A549 (cell line): ENCODE measurements at regions of chr1 and their contacts with region 1.

Region 1: GRCh38 chr1:156728597-156729462 is at the start of gene ISG20L2:
- DNase-seq: peak; percentile 94 to 99
- ATAC-seq: peak; percentile 87 to 89
- H3K4me3 ChIP-seq: peak within 1 kb of the TSS; percentile 89
- H3K27ac ChIP-seq: peak within 1 kb of the TSS; percentile 93
- H3K4me1 ChIP-seq: peaks cover 35% of the 10 kb centered on the region
- CTCF ChIP-seq: no peak
- EP300 ChIP-seq: no peak
- POLR2A ChIP-seq: peak; percentile 29
- RAD21 ChIP-seq: no peak
- polyA plus RNA-seq, gene ISG20L2: 42.5 and 55.7 TPM in 2 replicates

Region 2: GRCh38 chr1:156659994-156660751 is 68.7 kb before region 1 on chr1:
- CTCF ChIA-PET with region 1: interaction called, 24 read pairs
- POLR2A ChIA-PET with region 1: interaction called, 10 read pairs
- DNase-seq: peak; percentile 98
- ATAC-seq: peak; percentile 70 to 83
- H3K4me3 ChIP-seq: peak overlapping the region; percentile 77
- H3K27ac ChIP-seq: peak overlapping the region; percentile 97
- H3K4me1 ChIP-seq: peaks cover 65% of the 10 kb centered on the region
- CTCF ChIP-seq: peak; percentile 99
- EP300 ChIP-seq: peak in 1 of 2 experiments; percentile 62; a peak in 2 of 5 replicates
- POLR2A ChIP-seq: peak; percentile 44; the same call in 1 of the 2 replicates
- RAD21 ChIP-seq: peak; percentile 78 to 91

Region 3: GRCh38 chr1:156751758-156752757 is 23.2 kb after region 1 on chr1:
- CTCF ChIA-PET with region 1: interaction called, 130 read pairs
- POLR2A ChIA-PET with region 1: interaction called, 32 read pairs
- DNase-seq: peak; percentile 83 to 96
- ATAC-seq: peak; percentile 59 to 67
- H3K4me3 ChIP-seq: peak overlapping the region; percentile 92
- H3K27ac ChIP-seq: peak overlapping the region; percentile 99 to 100
- H3K4me1 ChIP-seq: peaks cover 31% of the 10 kb centered on the region
- CTCF ChIP-seq: no peak
- EP300 ChIP-seq: no peak
- POLR2A ChIP-seq: peak; percentile 51; the same call in 1 of the 2 replicates
- RAD21 ChIP-seq: 0 out of 5 replicates have a peak, but pooled peaks have one; percentile 7 to 27

Region 4: GRCh38 chr1:156797212-156797871 is 68.5 kb after region 1 on chr1:
- CTCF ChIA-PET with region 1: interaction called, 40 read pairs
- POLR2A ChIA-PET with region 1: interaction called, 6 read pairs
- DNase-seq: peak; percentile 68 to 75
- ATAC-seq: peak; percentile 89 to 91
- H3K4me3 ChIP-seq: no peak overlapping the region
- H3K27ac ChIP-seq: no peak overlapping the region
- H3K4me1 ChIP-seq: no peaks in the 10 kb centered on the region
- CTCF ChIP-seq: peak; percentile 87
- EP300 ChIP-seq: no peak
- POLR2A ChIP-seq: no peak
- RAD21 ChIP-seq: peak; percentile 72 to 78

Region 5: DNA sequence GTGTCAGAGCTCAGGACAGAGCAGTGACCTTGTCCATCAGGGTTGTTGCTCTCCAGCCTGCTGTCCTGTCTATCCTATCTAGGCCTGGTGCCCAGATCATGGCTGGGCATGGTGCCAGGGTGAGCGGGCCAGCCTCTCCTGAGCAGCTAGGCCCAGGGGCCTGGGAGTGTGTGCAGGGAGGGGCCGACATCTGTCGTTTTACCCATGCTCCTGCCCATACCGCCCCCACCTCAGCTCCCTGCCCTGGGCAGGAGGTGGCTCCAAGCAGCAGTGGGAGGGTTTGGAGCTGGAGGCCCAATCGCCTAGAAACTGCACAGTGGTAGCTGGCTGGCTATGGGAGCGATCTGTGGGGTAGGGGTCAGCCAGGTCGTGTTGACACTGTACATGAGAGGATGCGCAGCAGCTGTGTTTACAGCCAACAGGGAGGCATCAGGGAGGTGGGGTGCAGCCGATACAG is 123.6 kb after region 1 on chr1:
- CTCF ChIA-PET with region 1: interaction called, 117 read pairs
- POLR2A ChIA-PET with region 1: interaction called, 3 read pairs
- DNase-seq: peak in 1 of 2 experiments; percentile 27
- ATAC-seq: peak in 1 of 2 experiments; percentile 37; a peak in 3 of 6 replicates
- H3K4me3 ChIP-seq: no peak overlapping the region
- H3K27ac ChIP-seq: no peak overlapping the region
- H3K4me1 ChIP-seq: peaks cover 9% of the 10 kb centered on the region; the same call in 2 of the 3 replicates
- CTCF ChIP-seq: no peak
- EP300 ChIP-seq: no peak
- POLR2A ChIP-seq: no peak
- RAD21 ChIP-seq: no peak

Region 6: DNA sequence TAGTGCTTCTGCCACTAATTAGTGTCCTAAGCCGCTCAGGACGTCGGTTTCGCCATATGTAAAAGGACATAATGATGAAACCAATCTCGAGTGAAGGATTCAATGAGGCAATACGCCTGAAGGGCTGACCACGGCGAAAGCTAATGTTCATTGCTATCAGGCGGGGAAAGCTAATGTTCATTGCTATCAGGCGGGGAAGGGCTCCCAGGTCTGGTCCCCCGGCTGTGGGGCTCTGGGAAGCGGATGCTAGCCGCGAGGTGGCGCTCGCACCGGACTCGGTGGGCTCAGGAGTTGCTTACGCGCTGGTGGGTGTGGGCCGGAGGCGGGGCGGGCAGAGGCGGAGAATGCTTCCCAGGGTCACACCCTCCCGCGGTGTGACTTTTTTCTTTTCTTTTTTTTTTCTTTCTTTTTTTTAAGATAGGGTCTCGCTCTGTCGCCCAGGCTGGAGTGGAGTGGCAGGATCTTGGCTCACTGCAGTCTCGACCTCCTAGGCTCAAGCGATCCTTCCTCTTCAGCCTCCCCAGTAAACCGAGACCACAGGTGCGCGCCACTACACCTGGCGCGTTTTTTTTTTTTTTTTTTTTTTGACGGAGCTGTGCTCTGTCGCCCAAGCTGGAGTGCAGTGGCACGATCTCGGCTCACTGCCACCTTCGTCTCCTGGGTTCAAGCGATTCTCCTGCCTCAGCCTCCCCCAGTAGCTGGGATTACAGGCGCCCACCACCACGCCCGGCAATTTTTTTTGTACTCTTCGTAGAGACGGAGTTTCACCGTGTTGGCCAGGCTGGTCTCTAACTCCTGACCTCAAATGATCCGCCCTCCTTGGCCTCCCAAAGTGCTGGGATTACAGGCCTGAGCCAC is 163.6 kb after region 1 on chr1:
- CTCF ChIA-PET with region 1: interaction called, 108 read pairs
- POLR2A ChIA-PET with region 1: interaction called, 6 read pairs
- DNase-seq: peak; percentile 89
- ATAC-seq: peak; percentile 65 to 86
- H3K4me3 ChIP-seq: peak overlapping the region; percentile 19; the same call in 2 of the 3 replicates
- H3K27ac ChIP-seq: peak overlapping the region; percentile 61 to 93; a peak in 5 of 6 replicates
- H3K4me1 ChIP-seq: peaks cover 40% of the 10 kb centered on the region
- CTCF ChIP-seq: peak; percentile 93
- EP300 ChIP-seq: no peak
- POLR2A ChIP-seq: no peak
- RAD21 ChIP-seq: peak; percentile 69 to 83